HepG2 (cell line): ENCODE measurements at regions of chr4 and their contacts with region 1.

Region 1: DNA sequence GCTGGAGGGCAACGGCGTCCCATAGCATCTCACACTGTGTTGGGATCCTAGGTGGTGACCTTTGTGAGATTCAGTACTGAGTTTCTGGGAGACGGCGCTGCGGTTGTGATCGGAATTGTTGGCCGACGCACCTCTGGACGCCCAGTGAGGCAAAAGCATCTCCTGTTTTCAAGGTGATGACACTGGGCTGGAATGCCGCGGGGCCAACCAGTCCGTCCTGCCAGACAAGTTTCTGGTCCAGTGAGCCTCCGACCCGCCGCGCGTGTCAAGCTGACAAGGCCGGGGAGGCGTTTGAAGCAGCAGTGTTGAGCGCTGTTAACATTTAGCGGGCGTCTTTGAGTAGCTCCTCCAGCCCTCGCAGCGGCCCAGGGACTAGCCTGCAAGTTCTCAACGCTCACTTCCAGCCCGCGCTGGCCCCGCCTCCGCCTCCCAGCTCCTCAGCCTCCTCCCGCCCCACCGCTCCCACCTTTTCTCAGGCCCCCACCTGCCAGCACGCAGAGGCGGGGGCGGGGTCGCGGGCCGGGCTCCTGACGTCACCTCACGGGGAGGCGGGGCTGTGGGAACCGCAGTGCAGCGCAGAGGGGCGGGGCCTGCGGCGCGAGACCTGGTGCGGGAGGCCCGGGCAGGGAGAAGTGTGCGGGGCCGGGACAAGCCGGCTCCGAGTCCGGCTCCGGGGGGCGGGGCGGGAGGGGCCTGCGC is 476 bp upstream of the CDS1 start:
- DNase-seq: peak; percentile 61
- ATAC-seq: peak; percentile 87
- H3K4me3 ChIP-seq: peak overlapping the region; percentile 71 to 84 (median 71)
- H3K27ac ChIP-seq: no peak overlapping the region
- H3K4me1 ChIP-seq: peaks cover 36% of the 10 kb centered on the region
- H3K27me3 ChIP-seq: peaks cover 2 to 21% of the 10 kb centered on the region in 2 experiments; a peak in 2 of 5 replicates
- CTCF ChIP-seq: no peak
- EP300 ChIP-seq: no peak
- POLR2A ChIP-seq: no peak
- RAD21 ChIP-seq: no peak

Region 2: DNA sequence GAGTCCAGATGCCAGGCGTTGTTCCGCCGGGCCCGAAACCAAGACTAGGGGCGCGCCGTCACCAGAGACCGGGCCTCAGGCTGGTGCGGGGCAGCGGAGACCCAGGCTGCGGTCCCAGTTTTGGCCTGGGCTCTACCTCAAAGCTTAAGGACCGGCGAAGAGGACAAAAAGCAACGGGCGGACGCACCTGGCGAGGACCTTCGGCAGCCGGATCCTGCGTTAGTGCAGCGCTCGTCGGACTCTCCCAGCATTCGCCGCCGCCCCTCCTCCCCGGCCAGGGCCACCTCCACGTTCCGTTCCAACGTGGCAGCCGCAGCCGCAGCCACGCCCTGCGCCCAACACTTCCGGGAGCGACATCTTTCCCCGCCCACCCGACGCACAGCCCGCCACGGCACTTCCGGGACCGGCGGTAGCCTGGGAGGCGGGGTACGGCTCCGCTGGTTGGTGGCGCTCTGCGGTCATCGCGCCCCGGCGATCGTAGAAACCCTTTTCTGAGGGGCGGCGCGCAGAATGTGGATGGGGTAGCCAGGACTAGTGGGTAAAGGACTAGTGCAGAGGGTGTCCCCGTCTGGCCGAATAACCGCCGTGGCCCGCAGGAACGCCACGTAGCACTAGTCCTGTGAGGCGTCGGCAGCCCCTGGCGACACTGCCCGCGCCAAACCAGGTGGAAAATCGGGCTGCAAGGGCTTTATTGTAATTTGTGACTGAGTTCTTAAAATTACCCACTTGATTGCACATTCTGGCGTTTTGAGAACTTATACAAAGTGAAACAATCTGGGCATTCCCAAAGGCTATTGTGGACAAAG is 1691.3 kb before region 1 on chr4 and contains the start of gene SEC31A:
- CTCF ChIA-PET with region 1: no interaction called
- POLR2A ChIA-PET with region 1: no interaction called
- in situ Hi-C with region 1: no loop called
- intact Hi-C with region 1: no loop called
- DNase-seq: peak; percentile 91
- ATAC-seq: peak; percentile 91
- H3K4me3 ChIP-seq: peak within 1 kb of the TSS; percentile 81 to 99 (median 91)
- H3K27ac ChIP-seq: peak within 1 kb of the TSS; percentile 98
- H3K4me1 ChIP-seq: peaks cover 41% of the 10 kb centered on the region
- H3K27me3 ChIP-seq: no peaks in the 10 kb centered on the region; a peak in 2 of 5 replicates
- CTCF ChIP-seq: peak; percentile 71
- EP300 ChIP-seq: peak in 1 of 2 experiments; percentile 59; a peak in 3 of 4 replicates
- POLR2A ChIP-seq: peak; percentile 94 to 97
- RAD21 ChIP-seq: peak; percentile 15; the same call in 1 of the 2 replicates
- total RNA-seq, gene SEC31A: 231 and 351 TPM in 2 replicates

Region 3: DNA sequence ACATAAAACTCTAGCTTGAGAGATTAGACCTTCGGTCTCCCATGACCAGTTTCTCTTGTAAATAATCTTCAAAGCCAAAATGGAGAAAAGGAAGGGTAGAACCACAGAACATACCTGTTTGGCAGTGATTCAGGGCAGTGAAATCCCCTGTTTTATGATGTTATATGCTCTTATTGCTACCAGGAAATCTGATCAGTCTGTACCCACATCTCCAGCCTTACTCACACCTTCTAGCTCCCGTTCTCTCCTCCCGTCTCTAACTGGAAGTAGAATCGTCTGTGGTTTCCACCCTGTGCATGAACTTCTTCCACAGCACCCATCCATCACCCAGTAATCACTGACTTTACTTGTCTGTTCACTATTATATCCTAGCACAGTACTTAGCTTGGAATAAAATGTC is 126.3 kb before region 1 on chr4:
- CTCF ChIA-PET with region 1: no interaction called
- POLR2A ChIA-PET with region 1: no interaction called
- in situ Hi-C with region 1: no loop called
- intact Hi-C with region 1: no loop called
- DNase-seq: no peak
- ATAC-seq: no peak
- H3K4me3 ChIP-seq: no peak overlapping the region
- H3K27ac ChIP-seq: no peak overlapping the region
- H3K4me1 ChIP-seq: no peaks in the 10 kb centered on the region
- H3K27me3 ChIP-seq: no peaks in the 10 kb centered on the region
- CTCF ChIP-seq: no peak
- EP300 ChIP-seq: no peak
- POLR2A ChIP-seq: no peak
- RAD21 ChIP-seq: no peak

Region 4: DNA sequence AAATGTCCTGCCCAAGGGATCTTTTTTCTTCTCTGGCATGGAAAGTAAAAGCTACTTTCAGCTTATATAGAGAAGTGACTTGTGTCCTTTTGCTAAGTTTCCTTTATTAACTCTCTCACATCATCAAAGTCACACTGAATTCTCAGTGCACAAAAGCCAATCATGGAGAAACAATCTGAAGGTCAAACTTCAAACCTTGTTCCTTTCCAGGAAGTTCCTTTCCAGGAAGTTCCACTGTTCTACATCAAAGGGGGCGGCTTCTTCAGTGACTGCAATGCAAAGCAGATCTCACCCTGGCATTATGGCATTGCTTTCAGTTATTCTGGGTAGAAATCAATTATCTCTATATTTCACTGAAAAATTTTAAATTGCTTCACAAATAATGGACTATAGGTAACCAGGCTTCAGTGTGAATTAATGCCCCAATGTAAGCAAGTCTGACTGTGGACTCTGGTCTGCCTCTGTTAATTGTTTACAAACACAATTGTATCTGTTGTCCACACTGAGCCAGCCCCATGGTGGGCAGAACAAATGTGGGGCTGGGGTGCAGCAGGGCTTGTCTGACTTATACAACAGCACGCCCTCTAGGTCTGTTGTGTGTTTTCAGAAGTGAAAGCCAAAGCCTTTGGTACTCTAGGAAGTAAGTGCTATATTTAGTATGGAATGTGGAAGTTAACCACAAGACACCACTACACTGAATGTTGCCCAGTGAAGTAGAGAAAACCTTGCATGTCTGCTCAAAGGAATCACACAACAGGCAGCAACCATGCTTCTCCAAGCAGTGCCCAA is 99.2 kb after region 1 on chr4:
- CTCF ChIA-PET with region 1: no interaction called
- POLR2A ChIA-PET with region 1: no interaction called
- in situ Hi-C with region 1: no loop called
- intact Hi-C with region 1: loop called (anchors 5 kb)
- DNase-seq: peak; percentile 38
- ATAC-seq: peak; percentile 87
- H3K4me3 ChIP-seq: no peak overlapping the region; a peak in 1 of 6 replicates
- H3K27ac ChIP-seq: peak overlapping the region; percentile 45
- H3K4me1 ChIP-seq: peaks cover 24% of the 10 kb centered on the region
- H3K27me3 ChIP-seq: no peaks in the 10 kb centered on the region
- CTCF ChIP-seq: peak; percentile 38
- EP300 ChIP-seq: no peak; a peak in 1 of 4 replicates
- POLR2A ChIP-seq: no peak
- RAD21 ChIP-seq: no peak

Region 5: DNA sequence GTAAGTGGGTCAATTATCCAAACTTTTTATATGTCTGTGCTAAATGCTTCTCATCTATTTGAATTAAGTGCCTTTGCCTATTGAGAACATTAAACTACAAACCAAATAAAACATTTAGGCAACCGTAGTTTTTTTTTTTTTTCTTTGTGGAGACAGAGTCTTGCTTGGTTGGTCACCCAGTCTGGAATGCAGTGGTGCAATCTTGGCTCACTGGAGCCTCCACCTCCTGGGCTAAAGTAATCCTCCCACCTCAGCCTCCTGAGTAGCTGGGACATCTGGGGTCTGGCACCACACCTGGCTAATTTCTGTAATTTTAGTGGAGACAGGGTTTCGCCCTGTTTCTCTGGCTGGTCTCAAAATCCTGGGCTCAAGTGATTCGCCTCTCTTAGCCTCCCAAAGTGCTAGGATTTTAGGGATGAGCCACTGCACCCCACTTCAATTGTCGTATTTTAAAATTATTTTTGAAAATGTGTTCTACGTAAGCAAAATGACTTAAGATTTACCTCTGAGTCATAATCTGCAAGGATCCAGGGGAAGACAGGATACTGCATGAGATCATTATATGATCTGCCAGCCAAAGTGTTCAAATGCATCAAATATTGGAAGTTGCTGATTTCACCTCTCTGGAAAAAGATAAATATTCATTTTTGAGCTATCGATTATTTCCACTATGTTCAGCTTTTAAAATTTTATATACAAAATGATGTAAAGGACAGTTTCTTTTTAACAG is 126.1 kb after region 1 on chr4:
- CTCF ChIA-PET with region 1: no interaction called
- POLR2A ChIA-PET with region 1: no interaction called
- in situ Hi-C with region 1: loop called (anchors 5 kb)
- intact Hi-C with region 1: no loop called
- DNase-seq: no peak
- ATAC-seq: no peak
- H3K4me3 ChIP-seq: no peak overlapping the region
- H3K27ac ChIP-seq: no peak overlapping the region
- H3K4me1 ChIP-seq: peaks cover 10% of the 10 kb centered on the region
- H3K27me3 ChIP-seq: no peaks in the 10 kb centered on the region
- CTCF ChIP-seq: no peak
- EP300 ChIP-seq: no peak
- POLR2A ChIP-seq: no peak
- RAD21 ChIP-seq: no peak

Region 6: DNA sequence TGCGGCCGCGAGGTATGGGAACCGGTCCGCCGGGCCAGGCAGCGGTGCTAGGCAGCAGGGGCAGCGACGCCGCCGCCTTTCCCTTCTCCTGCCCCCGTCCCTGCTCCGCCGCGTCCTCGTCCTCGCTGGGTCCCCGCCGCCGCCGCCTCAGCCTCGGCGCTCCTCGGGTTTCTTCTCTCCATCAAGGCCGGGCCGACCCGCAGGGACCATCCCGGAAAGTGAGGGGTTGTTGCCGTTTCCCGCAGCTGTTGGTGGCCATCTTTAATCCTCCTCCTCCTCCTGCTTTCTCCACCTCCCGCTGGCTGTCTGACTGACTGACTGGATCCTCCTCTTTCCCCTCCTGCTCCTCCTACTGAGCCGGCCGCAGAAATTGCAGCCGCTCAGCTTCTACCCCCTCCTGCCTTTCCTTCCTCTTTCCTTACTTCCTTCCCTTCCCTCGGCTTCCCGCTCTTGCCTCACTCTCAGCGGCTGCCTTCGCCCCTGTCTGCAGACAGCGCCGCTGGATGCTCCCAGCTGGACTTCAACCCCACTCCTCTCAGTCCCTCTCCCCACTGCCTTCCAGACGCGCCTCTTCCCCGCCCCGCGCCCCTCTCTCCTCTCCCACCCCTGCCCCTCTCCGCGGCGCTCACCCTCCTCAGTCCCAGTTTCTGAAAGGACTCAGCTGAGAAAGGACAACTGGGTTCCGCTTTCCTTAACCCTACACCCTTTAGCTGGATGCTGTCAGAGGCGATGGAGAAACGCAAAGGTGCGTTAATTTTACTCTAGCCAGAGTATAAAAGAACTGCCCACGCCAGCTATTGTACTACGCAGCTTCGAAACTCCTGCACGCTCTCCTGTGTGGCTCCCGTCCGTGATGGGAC is 384.2 kb after region 1 on chr4 and contains the start of gene WDFY3:
- CTCF ChIA-PET with region 1: no interaction called
- POLR2A ChIA-PET with region 1: interaction called, 4 read pairs
- in situ Hi-C with region 1: loop called (anchors 10 kb)
- intact Hi-C with region 1: loop called (anchors 2 kb)
- DNase-seq: peak; percentile 58
- ATAC-seq: peak; percentile 85
- H3K4me3 ChIP-seq: peak within 1 kb of the TSS; percentile 89 to 91 (median 90)
- H3K27ac ChIP-seq: peak within 1 kb of the TSS; percentile 82
- H3K4me1 ChIP-seq: peaks cover 23% of the 10 kb centered on the region
- H3K27me3 ChIP-seq: no peaks in the 10 kb centered on the region
- CTCF ChIP-seq: no peak; the same call in none of the 2 replicates
- EP300 ChIP-seq: no peak
- POLR2A ChIP-seq: peak; percentile 66 to 80
- RAD21 ChIP-seq: no peak; the same call in 1 of the 2 replicates
- total RNA-seq, gene WDFY3: 24.5 and 30.8 TPM in 2 replicates